ENCODE measurements at regions of chr17 and their contacts with region 1.

Region 1: DNA sequence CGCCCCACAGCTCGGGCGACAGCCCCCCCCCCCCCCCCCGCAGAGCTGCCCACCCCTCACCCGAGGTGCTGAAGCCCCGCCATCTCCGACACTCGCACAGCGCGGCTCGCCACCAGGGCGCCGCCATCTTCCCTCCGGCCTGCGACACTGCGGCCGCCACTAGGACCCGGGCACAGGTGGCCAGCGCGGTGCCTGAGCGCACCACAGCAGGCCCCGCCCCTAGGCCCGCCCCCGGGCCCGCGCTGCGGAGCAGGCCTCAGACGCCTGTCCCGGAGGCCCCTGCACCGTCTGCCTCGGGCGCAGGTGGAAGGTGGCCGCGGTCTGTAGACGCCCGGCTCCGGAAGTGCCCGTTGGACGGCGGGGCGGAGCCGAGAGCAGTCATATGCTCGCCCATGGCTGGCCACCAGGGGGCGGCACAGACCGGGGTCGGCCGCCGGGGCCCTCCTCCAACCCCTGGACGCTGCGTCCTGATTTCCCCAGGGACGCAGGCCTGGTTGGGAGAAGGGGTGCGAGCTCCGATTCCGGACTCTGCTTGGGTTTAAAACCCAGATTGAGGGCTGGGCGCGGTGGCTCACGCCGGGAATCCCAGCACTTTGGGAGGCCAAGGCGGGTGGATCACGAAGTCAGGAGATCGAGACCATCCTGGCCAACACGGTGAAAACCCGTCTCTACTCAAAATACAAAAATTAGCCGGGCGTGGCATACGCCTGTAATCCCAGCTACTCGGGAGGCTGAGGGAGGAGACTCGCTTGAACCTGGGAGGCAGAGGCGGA is at the start of gene MRPL38:
- DNase-seq: peak; percentile 94 to 98 (median 98)
- ATAC-seq: peak; percentile 97
- H3K4me3 ChIP-seq: peak within 1 kb of the TSS; percentile 74
- H3K4me1 ChIP-seq: peaks cover 7% of the 10 kb centered on the region
- CTCF ChIP-seq: peak; percentile 99
- total RNA-seq, gene MRPL38: 87.0 to 98.0 (median 89.4) TPM

Region 2: DNA sequence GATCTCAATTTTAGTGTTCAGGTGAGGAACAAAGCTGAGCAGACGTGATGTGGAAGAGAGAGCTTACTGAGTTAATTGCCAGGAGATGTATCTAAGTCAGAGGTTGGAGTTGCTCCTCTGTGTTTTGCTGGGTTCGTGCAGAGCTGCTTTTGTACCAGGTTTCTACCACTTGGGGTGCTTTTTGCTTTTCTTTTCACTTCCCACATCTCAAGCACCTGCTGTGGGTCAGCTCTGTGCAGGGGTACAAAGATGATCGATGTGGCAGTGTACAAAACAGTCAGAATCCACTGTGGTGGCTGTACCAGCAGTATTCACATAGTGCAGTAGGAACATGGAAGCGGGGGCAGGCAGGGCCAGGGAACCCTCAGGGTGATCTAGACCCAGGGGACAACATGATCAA is 105.5 kb before region 1 on chr17:
- intact Hi-C with region 1: no loop called
- DNase-seq: no peak
- ATAC-seq: no peak
- H3K4me3 ChIP-seq: no peak overlapping the region
- H3K4me1 ChIP-seq: no peaks in the 10 kb centered on the region
- CTCF ChIP-seq: no peak

Region 3: DNA sequence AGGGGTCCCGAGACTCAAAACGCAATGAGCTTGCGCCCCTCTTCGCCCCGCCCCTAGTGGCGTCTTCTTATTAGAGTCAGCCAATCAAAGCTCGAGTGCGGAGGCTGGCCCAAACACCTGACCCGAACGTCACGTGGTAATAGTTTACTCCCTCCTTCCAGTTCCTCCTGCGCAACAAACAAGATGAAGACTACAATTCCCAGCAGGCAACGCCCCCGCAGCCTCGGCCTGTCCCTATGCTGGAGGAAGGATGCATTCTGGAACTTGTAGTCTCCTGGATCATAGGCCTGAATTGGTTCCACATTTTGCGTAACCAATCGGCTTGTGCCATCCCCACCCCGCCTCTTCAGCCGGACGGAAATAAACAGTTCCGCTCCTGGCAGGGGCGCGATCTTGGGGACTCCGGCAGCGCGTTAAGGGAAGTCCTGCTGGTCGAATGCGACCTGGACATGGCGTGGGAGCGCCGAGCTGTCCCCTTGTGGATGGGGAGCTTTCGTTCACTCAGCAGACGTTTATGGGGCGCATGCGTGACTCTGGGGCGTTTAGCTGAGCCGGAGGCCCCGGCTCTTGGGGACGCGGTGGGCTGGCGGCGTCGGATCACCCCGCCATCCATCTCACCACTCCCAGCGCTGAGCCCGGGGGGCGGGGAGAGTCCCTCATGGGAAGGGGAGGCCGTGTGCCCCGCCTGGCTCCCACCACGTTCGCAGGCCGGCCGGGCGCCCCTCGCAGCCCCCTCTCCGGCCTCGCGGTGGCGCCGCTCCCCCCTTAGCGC is 49.4 kb before region 1 on chr17 and contains the start of gene WBP2:
- intact Hi-C with region 1: no loop called
- DNase-seq: peak; percentile 94 to 99 (median 99)
- ATAC-seq: peak; percentile 93
- H3K4me3 ChIP-seq: peak within 1 kb of the TSS; percentile 85
- H3K4me1 ChIP-seq: peaks cover 6% of the 10 kb centered on the region
- CTCF ChIP-seq: peak; percentile 12
- total RNA-seq, gene WBP2: 99.1 to 114 (median 99.8) TPM

Region 4: DNA sequence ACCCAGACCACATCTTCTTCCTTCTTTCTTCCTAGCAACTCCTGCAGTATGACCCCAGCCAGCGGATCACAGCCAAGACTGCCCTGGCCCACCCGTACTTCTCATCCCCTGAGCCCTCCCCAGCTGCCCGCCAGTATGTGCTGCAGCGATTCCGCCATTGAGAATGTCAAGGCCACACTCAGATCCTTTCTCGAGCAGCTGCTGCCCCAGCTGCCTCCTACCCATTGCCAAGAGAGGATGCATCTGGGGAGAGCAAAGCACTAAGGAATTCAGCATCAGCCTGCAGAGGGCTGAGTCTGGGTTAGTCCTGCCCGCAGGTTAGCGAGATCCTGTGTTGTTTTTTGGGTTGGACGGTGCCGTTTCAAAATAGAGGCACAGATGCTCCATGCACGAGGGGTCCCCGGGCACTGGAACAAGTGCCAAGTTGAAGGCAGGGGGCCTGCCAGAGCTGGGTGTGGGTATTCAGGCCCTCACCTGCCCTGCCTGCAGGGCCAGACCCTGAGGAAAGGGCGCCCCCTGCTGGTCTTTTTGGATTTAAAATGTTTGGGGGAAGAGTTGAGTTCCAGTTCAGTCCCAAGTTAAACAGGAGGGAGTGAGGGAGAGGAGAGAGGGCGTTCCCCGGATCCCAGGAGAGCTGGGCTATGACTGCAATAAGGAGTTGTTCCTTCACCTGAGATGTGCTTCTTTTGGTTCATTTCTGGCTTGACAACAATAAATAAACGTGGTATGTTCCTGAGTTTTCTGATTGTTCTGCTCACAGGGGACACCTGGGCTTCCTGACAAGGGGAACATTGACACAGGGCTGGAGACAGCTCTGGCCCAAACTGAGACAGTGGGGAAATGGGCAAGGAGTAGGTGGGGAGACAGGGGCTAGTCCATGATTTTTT is 100.6 kb after region 1 on chr17:
- intact Hi-C with region 1: loop called (anchors 10 kb)
- DNase-seq: peak; percentile 66 to 94 (median 82)
- ATAC-seq: peak; percentile 75
- H3K4me3 ChIP-seq: no peak overlapping the region
- H3K4me1 ChIP-seq: peaks cover 18% of the 10 kb centered on the region
- CTCF ChIP-seq: peak; percentile 40